MCF 10A (cell line): ENCODE measurements at regions of chr3 and their contacts with region 1.

Region 1: DNA sequence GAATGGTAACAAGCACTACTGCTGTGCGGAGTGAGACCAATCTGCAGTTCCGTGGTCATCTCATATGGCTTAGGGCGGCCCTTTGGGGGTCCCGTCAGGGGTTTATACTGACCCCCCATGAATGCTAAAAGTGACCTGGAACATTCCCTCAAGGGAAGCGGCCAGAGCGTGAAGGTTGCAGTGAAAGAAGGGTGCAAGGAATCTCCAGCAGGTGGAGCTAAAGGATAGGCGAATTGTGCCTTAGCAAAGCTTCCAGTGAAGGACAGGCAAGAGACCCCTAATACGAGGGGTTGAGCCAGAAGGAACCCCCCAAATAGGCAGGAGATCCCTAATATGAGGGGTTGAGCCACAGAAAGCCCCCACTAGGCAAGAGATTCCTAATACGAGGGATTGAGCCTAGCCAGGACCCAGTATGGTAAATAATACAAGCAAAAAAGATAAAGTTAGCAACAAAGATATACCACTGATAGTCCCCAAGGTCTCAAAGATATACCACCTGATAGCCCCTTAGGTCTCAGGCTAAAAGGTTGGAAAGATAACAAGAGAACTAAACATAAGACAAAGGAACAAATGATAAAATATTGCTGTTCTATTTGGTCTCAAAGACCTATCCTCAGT is 32.8 kb downstream of the ZNF589 start:
- DNase-seq: peak; percentile 74
- H3K4me3 Mint-ChIP-seq: no peak overlapping the region
- H3K27ac Mint-ChIP-seq: no peak overlapping the region
- H3K4me1 Mint-ChIP-seq: peaks cover 17% of the 10 kb centered on the region
- H3K27me3 Mint-ChIP-seq: no peaks in the 10 kb centered on the region
- CTCF ChIP-seq: peak; percentile 85

Region 2: DNA sequence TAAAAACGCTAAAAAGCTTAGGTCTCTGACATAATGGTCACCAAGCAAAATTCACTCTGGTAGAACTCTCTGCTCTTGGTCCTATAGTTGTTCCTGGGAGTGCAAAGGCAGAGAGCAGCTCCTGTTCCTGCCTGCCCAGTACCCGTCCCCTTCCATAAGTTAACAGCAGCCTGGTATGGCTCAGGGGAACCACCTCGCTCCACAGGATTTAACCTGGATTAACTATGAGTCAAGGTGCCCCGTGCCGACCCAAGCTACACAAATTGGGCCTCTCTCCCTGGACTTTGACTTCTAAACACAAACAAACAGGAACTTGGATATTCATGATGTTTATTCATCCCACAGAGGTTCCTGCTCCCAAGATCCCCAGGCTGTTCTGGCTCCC is 830.1 kb before region 1 on chr3:
- CTCF ChIA-PET with region 1: no interaction called
- POLR2A ChIA-PET with region 1: no interaction called
- intact Hi-C with region 1: no loop called
- DNase-seq: peak; percentile 69
- H3K4me3 Mint-ChIP-seq: peak overlapping the region; percentile 30
- H3K27ac Mint-ChIP-seq: peak overlapping the region; percentile 98
- H3K4me1 Mint-ChIP-seq: peaks cover 21% of the 10 kb centered on the region
- H3K27me3 Mint-ChIP-seq: no peaks in the 10 kb centered on the region
- CTCF ChIP-seq: no peak

Region 3: GRCh38 chr3:47772788-47773187 is 500.9 kb before region 1 on chr3:
- CTCF ChIA-PET with region 1: no interaction called
- POLR2A ChIA-PET with region 1: no interaction called
- intact Hi-C with region 1: no loop called
- DNase-seq: no peak
- H3K4me3 Mint-ChIP-seq: no peak overlapping the region
- H3K27ac Mint-ChIP-seq: no peak overlapping the region
- H3K4me1 Mint-ChIP-seq: peaks cover 5% of the 10 kb centered on the region
- H3K27me3 Mint-ChIP-seq: no peaks in the 10 kb centered on the region
- CTCF ChIP-seq: no peak

Region 4: DNA sequence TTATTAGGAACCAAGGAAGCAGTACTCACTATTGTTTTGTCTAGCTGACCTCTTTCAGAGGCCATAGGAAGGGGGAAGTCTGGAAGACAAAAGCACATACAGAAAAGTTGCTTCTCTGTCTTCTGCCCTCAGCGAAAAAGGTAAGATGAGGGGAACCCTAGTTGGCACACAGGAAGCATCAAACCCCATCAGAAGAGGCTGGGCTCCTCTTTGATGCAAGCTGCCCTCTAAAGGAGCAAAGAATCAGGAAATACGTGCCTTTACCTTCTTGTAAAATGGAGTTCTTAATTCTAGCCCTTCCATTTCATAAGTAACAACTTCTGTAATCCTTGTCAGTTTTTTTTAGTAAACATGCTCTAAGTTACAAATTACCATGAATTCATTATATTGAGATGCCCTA is 47.3 kb after region 1 on chr3:
- CTCF ChIA-PET with region 1: no interaction called
- POLR2A ChIA-PET with region 1: no interaction called
- intact Hi-C with region 1: no loop called
- DNase-seq: no peak
- H3K4me3 Mint-ChIP-seq: no peak overlapping the region
- H3K27ac Mint-ChIP-seq: no peak overlapping the region
- H3K4me1 Mint-ChIP-seq: no peaks in the 10 kb centered on the region
- H3K27me3 Mint-ChIP-seq: peaks cover 30% of the 10 kb centered on the region
- CTCF ChIP-seq: no peak

Region 5: DNA sequence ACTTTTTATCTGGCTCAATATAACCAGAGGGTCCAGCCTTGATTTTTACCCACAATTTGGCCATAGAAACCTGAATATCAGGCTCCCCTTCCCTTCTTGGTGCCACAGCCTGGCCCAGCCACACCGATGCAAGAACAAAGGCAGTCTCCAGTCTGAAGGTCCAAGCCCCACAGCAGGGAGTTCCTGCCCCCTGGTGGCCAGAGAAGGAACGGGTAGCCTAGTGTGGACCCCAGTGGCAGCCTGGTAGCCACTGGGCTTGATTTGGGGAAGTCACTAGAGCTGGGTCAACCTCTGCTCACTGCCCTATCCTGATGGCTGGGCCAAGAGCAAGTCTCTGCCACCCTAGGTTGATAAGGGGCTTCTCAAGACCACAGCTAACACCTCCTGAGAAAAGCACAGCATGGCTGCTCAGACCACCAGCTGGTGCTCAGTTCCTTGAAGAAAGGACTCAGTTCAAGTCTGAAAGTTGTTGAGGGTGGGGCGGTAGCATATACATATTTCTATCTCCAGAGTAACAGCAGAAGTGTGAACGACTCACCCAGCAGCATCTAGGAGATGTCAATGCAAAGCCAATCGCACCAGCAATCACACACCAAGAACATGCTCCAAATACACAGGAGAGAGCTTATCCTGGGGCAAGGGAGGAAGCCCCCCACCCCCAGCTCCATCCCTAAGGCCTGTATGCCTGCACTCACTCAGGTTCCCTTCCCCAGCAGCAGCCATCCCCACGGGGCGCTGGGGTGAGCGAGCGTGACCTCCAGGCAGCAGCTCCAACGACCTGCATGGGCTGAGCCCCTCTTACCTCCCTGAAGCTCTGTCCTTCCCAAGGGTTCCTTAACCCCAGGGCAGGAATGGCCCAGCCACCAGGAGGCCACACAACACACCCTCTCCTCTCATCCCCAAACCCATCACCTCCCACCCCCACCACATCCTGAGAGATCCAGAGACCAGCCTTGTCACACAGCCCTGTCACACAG is 275.3 kb after region 1 on chr3:
- CTCF ChIA-PET with region 1: interaction called, 6 read pairs
- POLR2A ChIA-PET with region 1: interaction called, 3 read pairs
- intact Hi-C with region 1: loop called (anchors 1 kb)
- DNase-seq: peak; percentile 80
- H3K4me3 Mint-ChIP-seq: no peak overlapping the region
- H3K27ac Mint-ChIP-seq: no peak overlapping the region
- H3K4me1 Mint-ChIP-seq: no peaks in the 10 kb centered on the region
- H3K27me3 Mint-ChIP-seq: no peaks in the 10 kb centered on the region
- CTCF ChIP-seq: peak; percentile 97